K562 (cell line): ENCODE measurements at regions of chr1 and their contacts with region 1.

Region 1: GRCh38 chr1:231200388-231201031 is 38.7 kb downstream of the TRIM67 start:
- DNase-seq: peak; percentile 72 to 94 (median 80)
- ATAC-seq: peak; percentile 84
- H3K4me3 ChIP-seq: no peak overlapping the region
- H3K27ac ChIP-seq: peak overlapping the region; percentile 5; the same call in 1 of the 3 replicates
- H3K4me1 ChIP-seq: peaks cover 42% of the 10 kb centered on the region in 2 experiments
- H3K27me3 ChIP-seq: no peaks in the 10 kb centered on the region; a peak in 1 of 5 replicates
- CTCF ChIP-seq: no peak
- EP300 ChIP-seq: peak; percentile 95
- POLR2A ChIP-seq: no peak
- RAD21 ChIP-seq: no peak

Region 2: DNA sequence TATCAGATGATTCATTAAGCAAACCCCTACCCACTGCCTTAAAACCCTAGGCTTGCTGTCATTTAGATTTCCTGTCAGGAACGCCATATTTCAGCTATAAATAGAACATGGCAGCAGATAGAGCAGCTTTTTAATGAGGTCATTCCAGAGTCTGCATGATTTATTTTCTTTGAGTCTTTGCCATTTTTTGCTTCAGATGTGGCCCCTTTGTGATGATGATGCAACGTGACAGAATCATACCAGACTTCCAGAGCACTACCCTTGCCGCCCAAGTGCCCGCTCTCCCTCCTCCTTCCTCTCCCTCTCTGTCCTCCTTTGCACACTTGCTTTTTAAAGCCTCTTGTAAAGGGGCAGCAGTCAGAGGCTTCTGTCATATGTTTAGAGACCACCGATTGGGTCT is 94.2 kb before region 1 on chr1:
- CTCF ChIA-PET with region 1: no interaction called
- POLR2A ChIA-PET with region 1: no interaction called
- in situ Hi-C with region 1: no loop called
- intact Hi-C with region 1: loop called (anchors 5 kb)
- DNase-seq: no peak
- ATAC-seq: no peak; the same call in 2 of the 3 replicates
- H3K4me3 ChIP-seq: no peak overlapping the region
- H3K27ac ChIP-seq: no peak overlapping the region
- H3K4me1 ChIP-seq: peaks cover 0 to 5% of the 10 kb centered on the region in 2 experiments; a peak in 2 of 5 replicates
- H3K27me3 ChIP-seq: peaks cover 11 to 25% of the 10 kb centered on the region in 2 experiments; a peak in 4 of 5 replicates
- CTCF ChIP-seq: no peak
- EP300 ChIP-seq: no peak
- POLR2A ChIP-seq: no peak
- RAD21 ChIP-seq: no peak

Region 3: GRCh38 chr1:231116738-231117137 is 83.8 kb before region 1 on chr1:
- CTCF ChIA-PET with region 1: no interaction called
- POLR2A ChIA-PET with region 1: no interaction called
- in situ Hi-C with region 1: no loop called
- intact Hi-C with region 1: no loop called
- DNase-seq: no peak
- ATAC-seq: no peak
- H3K4me3 ChIP-seq: no peak overlapping the region
- H3K27ac ChIP-seq: no peak overlapping the region
- H3K4me1 ChIP-seq: no peaks in the 10 kb centered on the region
- H3K27me3 ChIP-seq: peaks cover 0 to 8% of the 10 kb centered on the region in 2 experiments; a peak in 2 of 5 replicates
- CTCF ChIP-seq: no peak
- EP300 ChIP-seq: no peak
- POLR2A ChIP-seq: no peak
- RAD21 ChIP-seq: no peak

Region 4: GRCh38 chr1:231160895-231161666 is 39.4 kb before region 1 on chr1:
- CTCF ChIA-PET with region 1: no interaction called
- POLR2A ChIA-PET with region 1: interaction called, 3 read pairs
- in situ Hi-C with region 1: no loop called
- intact Hi-C with region 1: loop called (anchors 1 kb)
- DNase-seq: no peak
- ATAC-seq: no peak
- H3K4me3 ChIP-seq: no peak overlapping the region
- H3K27ac ChIP-seq: no peak overlapping the region
- H3K4me1 ChIP-seq: peaks cover 20 to 44% of the 10 kb centered on the region in 2 experiments
- H3K27me3 ChIP-seq: no peaks in the 10 kb centered on the region; a peak in 1 of 5 replicates
- CTCF ChIP-seq: no peak
- EP300 ChIP-seq: no peak
- POLR2A ChIP-seq: no peak
- RAD21 ChIP-seq: no peak